Pancreas (tissue), 10 donors: ENCODE measurements at regions of chr10 and their contacts with region 1.

Region 1: GRCh38 chr10:63976538-63976937 is 455.3 kb downstream of the REEP3 start:
- DNase-seq: peak in 5 of 6 donors; percentile 9 to 68 (median 34)
- ATAC-seq: peak; percentile 58 to 95 (median 91)
- H3K4me3 ChIP-seq: no peak overlapping the region
- H3K27ac ChIP-seq: no peak overlapping the region
- H3K4me1 ChIP-seq: no peaks in the 10 kb centered on the region
- H3K27me3 ChIP-seq: no peaks in the 10 kb centered on the region
- CTCF ChIP-seq: peak; percentile 20 to 47 (median 44)

Region 2: GRCh38 chr10:63866075-63866746 is 110.3 kb before region 1 on chr10:
- intact Hi-C with region 1: loop called in 2 of 3 experiments (anchors 5 kb)
- DNase-seq: peak in 4 of 6 donors; percentile 6 to 54 (median 32)
- ATAC-seq: peak; percentile 77 to 98 (median 94)
- H3K4me3 ChIP-seq: no peak overlapping the region
- H3K27ac ChIP-seq: no peak overlapping the region
- H3K4me1 ChIP-seq: peaks cover 0 to 4% (median 0%) of the 10 kb centered on the region in 3 donors
- H3K27me3 ChIP-seq: peaks cover 0 to 2% (median 0%) of the 10 kb centered on the region in 4 donors
- CTCF ChIP-seq: peak; percentile 50 to 81 (median 74)